Activated CD4-positive, alpha-beta T cell treated with anti-CD3 and anti-CD28 coated beads for 36 hours (primary cell): ENCODE measurements at regions of chr19 and their contacts with region 1.

Region 1: DNA sequence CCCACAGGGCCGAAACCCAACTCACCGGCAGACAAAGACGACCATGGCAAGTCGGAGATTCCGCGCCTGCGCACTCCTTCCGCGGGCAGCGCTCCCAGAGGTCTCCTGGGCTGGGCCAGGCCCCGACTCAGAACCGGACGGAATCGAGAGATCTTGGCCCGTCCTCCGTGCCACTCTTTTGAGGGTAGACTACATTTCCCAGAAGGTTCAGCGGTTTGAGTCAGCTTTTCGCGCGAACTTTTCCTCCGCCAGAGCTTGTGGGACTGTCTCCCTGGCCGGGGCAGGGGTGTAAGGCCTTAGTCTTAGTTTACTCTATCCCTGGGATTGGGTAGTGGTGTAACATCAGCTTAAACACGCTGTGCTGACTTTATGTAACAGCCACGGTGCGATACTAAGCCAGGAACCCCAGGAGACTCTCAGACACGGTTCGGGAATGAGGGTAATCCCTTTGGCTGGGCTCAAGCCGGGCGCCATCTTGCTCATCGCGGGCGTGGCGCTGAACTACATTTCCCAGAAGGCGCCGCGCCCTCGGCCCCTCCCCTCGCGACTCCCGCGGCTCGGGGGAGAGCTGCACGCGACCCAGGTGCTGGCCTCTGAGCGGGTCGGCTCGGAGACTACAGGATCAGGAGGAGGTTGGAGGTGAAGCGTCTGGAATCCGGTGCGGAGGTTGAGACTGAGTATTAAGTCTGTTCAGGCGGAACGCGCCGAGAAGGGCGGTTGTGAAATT is at the start of gene ZNF260:
- DNase-seq: peak; percentile 97
- ATAC-seq: peak; percentile 91
- H3K4me3 Mint-ChIP-seq: peak within 1 kb of the TSS; percentile 87
- H3K27ac Mint-ChIP-seq: peak within 1 kb of the TSS; percentile 96
- H3K4me1 Mint-ChIP-seq: peaks cover 14% of the 10 kb centered on the region
- H3K27me3 Mint-ChIP-seq: no peaks in the 10 kb centered on the region
- total RNA-seq, gene ZNF260: 5.7 to 8.2 TPM

Region 2: GRCh38 chr19:36418287-36419001 is 109.9 kb before region 1 on chr19 and contains the start of gene ZFP82:
- CTCF ChIA-PET with region 1: no interaction called
- POLR2A ChIA-PET with region 1: interaction called, 5 read pairs
- intact Hi-C with region 1: loop called in 1 of 2 experiments (anchors 1 kb)
- DNase-seq: peak; percentile 89
- ATAC-seq: peak; percentile 90
- H3K4me3 Mint-ChIP-seq: peak within 1 kb of the TSS; percentile 94
- H3K27ac Mint-ChIP-seq: peak within 1 kb of the TSS; percentile 97
- H3K4me1 Mint-ChIP-seq: peaks cover 12% of the 10 kb centered on the region
- H3K27me3 Mint-ChIP-seq: peaks cover 13% of the 10 kb centered on the region
- total RNA-seq, gene ZFP82: 8.4 to 8.8 TPM

Region 3: GRCh38 chr19:36497001-36497400 is 31.4 kb before region 1 on chr19:
- CTCF ChIA-PET with region 1: no interaction called
- POLR2A ChIA-PET with region 1: no interaction called
- intact Hi-C with region 1: no loop called
- DNase-seq: no peak
- ATAC-seq: no peak
- H3K4me3 Mint-ChIP-seq: no peak overlapping the region
- H3K27ac Mint-ChIP-seq: no peak overlapping the region
- H3K4me1 Mint-ChIP-seq: no peaks in the 10 kb centered on the region
- H3K27me3 Mint-ChIP-seq: no peaks in the 10 kb centered on the region

Region 4: GRCh38 chr19:36605101-36605876 is 76.9 kb after region 1 on chr19 and contains the start of gene ZNF382:
- CTCF ChIA-PET with region 1: no interaction called
- POLR2A ChIA-PET with region 1: no interaction called
- intact Hi-C with region 1: loop called (anchors 1 kb)
- DNase-seq: peak; percentile 94
- ATAC-seq: peak; percentile 86
- H3K4me3 Mint-ChIP-seq: peak within 1 kb of the TSS; percentile 81
- H3K27ac Mint-ChIP-seq: peak within 1 kb of the TSS; percentile 91
- H3K4me1 Mint-ChIP-seq: peaks cover 20% of the 10 kb centered on the region
- H3K27me3 Mint-ChIP-seq: no peaks in the 10 kb centered on the region
- total RNA-seq, gene ZNF382: 14.9 to 20.0 TPM

Region 5: DNA sequence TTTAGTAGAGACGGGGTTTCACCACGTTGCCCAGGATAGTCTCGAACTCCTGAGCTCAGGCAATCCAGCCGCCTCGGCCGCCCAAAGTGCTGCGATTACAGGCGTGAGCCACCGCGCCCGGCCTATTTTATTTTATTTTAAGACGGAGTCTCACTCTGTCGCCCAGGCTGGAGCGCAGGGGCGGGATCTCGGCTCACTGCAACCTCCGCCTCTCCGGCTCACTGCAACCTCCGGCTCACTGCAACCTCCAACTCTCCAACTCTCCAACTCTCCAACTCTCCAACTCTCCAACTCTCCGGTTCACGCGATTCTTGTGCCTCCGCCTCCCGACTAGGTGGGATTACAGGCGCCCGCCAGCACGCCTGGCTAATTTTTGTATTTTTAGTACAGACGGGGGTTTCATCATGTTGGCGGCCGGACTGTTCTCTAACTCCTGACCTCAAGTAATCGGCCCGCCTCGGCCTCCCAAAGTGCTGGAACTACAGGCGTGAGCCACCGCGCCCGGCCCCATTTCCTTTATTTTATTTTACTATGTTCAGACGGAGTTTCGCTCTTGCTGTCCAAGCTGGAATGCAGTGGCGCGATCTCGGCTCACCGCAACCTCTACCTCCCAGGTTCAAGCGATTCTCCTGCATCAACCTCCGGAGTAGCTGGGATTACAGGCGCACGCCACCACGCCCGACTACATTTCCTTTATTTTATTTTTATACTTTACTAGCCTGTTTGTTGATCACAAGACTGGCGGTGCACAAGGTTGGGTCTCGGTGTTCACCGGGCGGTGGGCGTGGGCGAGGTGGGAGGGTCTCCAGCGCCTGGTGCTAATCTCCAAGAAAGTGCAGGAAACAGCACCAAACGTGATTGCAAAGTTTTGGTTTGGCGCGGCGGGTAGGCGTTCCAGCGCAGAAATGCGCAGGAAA is 268.0 kb after region 1 on chr19:
- CTCF ChIA-PET with region 1: no interaction called
- POLR2A ChIA-PET with region 1: no interaction called
- intact Hi-C with region 1: loop called in 1 of 2 experiments (anchors 1 kb)
- DNase-seq: no peak
- ATAC-seq: no peak
- H3K4me3 Mint-ChIP-seq: peak overlapping the region; percentile 83
- H3K27ac Mint-ChIP-seq: peak overlapping the region; percentile 92
- H3K4me1 Mint-ChIP-seq: peaks cover 14% of the 10 kb centered on the region
- H3K27me3 Mint-ChIP-seq: peaks cover 4% of the 10 kb centered on the region

Region 6: DNA sequence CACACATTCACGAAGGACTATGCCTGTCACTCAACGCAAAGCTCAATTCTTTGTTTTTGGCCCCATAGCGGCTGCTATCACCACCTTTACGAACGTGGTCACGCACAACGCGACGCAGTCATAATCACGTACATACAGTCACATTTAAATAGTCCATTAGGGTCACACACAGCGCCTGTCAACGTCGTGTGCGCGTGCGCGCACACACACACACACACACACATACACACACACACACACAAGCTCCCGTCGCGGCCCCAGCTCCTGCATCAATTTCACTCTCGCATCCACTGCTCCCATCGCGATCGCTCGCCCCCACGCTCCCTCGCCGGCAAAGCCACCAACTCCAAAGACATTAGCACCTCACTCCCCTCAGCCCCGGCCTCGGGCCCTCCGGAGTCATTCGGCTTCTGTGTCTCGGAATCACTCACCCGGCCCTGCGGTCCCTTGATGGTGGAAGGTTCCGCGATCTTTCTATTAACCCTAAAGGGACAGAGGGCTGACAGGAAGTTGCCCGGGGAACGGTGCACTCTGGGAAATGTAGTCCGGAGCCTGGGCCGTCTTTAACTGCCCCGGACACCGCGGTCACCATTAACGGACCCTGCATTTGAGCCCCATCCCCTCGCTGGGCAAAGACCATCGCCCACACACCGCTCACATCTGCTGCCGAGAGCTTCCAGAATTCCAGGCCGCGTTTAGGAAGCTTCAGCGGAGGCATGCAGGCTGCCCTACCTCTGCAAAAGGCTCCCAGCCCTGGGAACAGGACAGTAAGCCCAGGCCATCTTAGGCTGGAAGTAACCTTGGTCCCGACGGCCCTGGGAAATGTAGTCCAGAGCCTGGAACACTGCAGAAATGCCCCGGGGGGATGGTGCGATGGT is 309.8 kb after region 1 on chr19 and contains the start of gene ZNF790:
- CTCF ChIA-PET with region 1: no interaction called
- POLR2A ChIA-PET with region 1: no interaction called
- intact Hi-C with region 1: loop called in 1 of 2 experiments (anchors 1 kb)
- DNase-seq: peak; percentile 92
- ATAC-seq: peak; percentile 97
- H3K4me3 Mint-ChIP-seq: no peak within 1 kb of the TSS
- H3K27ac Mint-ChIP-seq: peak within 1 kb of the TSS; percentile 72
- H3K4me1 Mint-ChIP-seq: peaks cover 2% of the 10 kb centered on the region
- H3K27me3 Mint-ChIP-seq: no peaks in the 10 kb centered on the region
- total RNA-seq, gene ZNF790: 7.1 to 8.8 TPM

Region 7: DNA sequence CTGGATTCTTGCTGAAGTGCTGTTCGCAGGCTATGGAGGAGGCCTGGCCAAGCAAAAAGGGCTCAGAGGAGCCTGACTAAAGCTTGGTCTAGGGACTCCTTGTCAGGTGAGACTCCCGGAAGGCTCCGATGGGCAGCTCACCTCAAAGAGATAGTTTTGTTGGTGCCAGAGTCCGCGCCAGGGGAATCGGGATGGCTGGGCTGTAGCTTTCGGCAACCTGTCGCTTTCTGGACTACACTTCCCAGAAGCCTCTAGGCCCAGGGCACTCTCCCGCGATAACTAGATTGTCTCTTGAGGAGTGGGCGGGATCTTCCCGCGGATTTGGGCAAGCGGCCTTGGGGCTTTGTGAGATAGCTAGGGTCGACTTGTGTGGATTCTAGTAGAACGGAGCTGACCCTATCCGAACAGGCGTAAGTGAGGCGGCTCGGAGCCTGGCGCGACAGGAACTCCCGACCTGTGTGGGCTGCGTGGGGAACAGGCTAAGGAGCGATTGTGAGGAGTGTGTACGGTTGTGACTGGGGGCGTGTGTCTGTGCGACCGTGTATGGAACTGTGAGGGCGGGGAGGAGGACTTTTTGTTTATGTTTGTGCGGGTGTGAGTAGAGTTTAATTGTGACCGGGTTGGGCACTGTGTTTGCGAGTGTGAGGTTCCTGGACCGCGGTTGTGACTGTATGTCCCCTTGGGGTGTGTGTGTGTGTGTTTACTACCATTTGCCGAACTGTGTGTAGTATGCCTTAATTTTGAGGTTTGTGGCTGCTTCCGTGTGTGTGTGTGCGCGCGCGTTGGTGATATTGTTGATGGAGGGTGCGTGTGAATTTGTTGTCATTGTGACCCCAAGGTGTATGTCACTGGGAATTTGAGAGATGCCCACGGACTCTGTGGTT is 322.4 kb after region 1 on chr19 and contains the start of gene ZNF345:
- CTCF ChIA-PET with region 1: no interaction called
- POLR2A ChIA-PET with region 1: interaction called, 5 read pairs
- intact Hi-C with region 1: loop called (anchors 1 kb)
- DNase-seq: peak; percentile 91
- ATAC-seq: peak; percentile 82
- H3K4me3 Mint-ChIP-seq: no peak within 1 kb of the TSS
- H3K27ac Mint-ChIP-seq: no peak within 1 kb of the TSS
- H3K4me1 Mint-ChIP-seq: peaks cover 10% of the 10 kb centered on the region
- H3K27me3 Mint-ChIP-seq: no peaks in the 10 kb centered on the region
- total RNA-seq, gene ZNF345: 3.5 to 4.6 TPM

Region 8: DNA sequence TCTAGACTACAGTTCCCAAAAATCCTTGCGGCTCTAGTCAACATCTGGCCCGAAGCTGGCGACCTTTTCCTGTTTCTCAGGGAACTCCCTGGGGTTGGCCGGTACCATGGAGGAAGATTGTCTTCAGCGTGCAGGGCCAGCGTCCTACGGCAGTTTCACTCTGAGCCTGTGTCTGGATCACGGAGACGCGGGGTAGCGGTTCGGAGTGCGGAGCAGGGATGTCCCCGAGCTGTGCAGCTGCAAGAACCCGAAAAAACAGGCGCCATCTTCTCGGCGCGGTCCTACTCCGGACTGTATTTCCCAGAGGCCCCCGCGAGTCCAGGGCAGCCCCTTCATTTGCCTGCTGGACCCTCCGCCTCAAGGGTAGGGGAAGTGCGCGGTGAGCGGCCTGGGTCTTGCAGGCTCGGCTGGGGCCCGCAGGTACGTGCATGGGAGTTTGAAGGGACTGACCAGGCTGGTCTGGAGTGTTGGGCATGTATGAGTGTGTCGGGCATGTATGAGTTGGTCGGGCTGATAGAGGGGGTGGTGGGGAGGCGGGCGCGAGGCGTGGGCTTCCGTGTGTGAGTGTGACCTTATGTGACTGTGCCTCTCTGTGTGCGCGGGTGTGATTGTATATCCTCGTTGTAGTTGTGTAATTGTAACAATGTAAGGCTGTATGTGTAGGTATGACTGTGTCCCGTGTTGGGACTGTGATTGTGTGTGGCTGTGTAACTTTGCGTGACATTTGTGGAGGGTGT is 689.7 kb after region 1 on chr19 and contains the start of gene ZNF383:
- CTCF ChIA-PET with region 1: no interaction called
- POLR2A ChIA-PET with region 1: no interaction called
- intact Hi-C with region 1: loop called in 1 of 2 experiments (anchors 1 kb)
- DNase-seq: peak; percentile 89
- ATAC-seq: peak; percentile 87
- H3K4me3 Mint-ChIP-seq: peak within 1 kb of the TSS; percentile 93
- H3K27ac Mint-ChIP-seq: peak within 1 kb of the TSS; percentile 99
- H3K4me1 Mint-ChIP-seq: peaks cover 24% of the 10 kb centered on the region
- H3K27me3 Mint-ChIP-seq: no peaks in the 10 kb centered on the region
- total RNA-seq, gene ZNF383: 8.5 to 9.2 TPM